Prostate gland (tissue), 2 donors: ENCODE measurements at regions of chr11 and their contacts with region 1.

Region 1: GRCh38 chr11:36469881-36470802 is 39.9 kb downstream of the TRAF6 start:
- DNase-seq: no peak
- H3K4me3 ChIP-seq: no peak overlapping the region
- H3K27ac ChIP-seq: no peak overlapping the region
- H3K4me1 ChIP-seq: no peaks in the 10 kb centered on the region
- H3K27me3 ChIP-seq: no peaks in the 10 kb centered on the region
- CTCF ChIP-seq: no peak
- POLR2A ChIP-seq: no peak

Region 2: DNA sequence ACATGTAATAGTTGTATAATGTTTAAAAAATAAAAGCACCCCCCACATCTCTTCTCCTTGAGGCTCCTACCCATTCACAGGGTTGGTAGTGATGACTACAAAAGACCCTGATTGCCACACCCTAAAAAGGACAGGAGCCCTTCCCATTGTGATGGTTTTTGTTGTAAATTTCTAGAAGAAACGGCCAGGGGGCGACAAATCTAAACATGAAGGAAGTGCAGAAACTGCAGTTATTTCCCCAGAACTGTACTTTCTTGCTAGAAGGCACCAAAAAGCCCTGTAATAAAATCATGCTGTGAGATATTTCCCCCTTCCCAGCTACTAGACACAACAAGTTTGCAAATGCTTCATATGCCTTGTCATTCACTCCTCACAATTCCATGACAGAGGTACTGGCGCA is 163.3 kb before region 1 on chr11:
- intact Hi-C with region 1: loop called (anchors 5 kb)
- DNase-seq: no peak
- H3K4me3 ChIP-seq: no peak overlapping the region
- H3K27ac ChIP-seq: no peak overlapping the region
- H3K4me1 ChIP-seq: no peaks in the 10 kb centered on the region
- H3K27me3 ChIP-seq: no peaks in the 10 kb centered on the region
- CTCF ChIP-seq: no peak
- POLR2A ChIP-seq: no peak

Region 3: DNA sequence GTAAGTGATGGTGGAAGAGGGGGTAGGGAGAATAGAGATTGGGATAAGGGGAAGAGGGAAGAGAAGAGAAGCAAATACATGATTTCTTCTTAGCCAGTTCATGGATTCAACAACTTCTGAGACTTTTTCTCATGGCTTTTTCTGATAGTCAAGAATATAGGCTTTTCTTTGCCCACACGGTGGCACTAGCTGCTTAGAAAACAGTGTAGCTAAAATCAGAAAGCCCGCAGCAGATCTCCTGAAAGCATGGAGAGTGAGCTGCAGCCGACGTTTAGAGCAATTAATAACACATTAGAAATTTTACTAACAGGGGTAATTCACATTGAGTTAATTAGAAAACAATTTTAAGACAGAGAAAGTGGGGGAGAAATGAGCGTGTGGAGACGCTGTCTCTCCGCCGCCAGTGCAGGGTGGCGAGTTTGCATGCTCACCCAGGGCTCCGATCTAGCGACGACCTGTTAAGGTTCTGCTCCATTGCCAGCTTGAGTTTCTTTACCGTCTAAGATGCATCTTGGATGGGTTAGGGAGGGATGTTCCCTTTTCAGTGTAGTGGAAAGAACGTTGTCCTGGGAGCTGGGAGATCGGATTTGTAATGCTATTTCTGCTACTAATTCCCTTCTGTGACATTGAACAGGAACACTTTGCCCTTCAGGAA is 94.4 kb after region 1 on chr11:
- intact Hi-C with region 1: no loop called
- DNase-seq: peak; percentile 50
- H3K4me3 ChIP-seq: peak overlapping the region in 1 of 2 donors; percentile 11
- H3K27ac ChIP-seq: no peak overlapping the region
- H3K4me1 ChIP-seq: no peaks in the 10 kb centered on the region
- H3K27me3 ChIP-seq: no peaks in the 10 kb centered on the region
- CTCF ChIP-seq: peak; percentile 32 to 71 (median 65)
- POLR2A ChIP-seq: no peak

Region 4: GRCh38 chr11:36890121-36890679 is 420.1 kb after region 1 on chr11:
- intact Hi-C with region 1: no loop called
- DNase-seq: no peak
- H3K4me3 ChIP-seq: no peak overlapping the region
- H3K27ac ChIP-seq: no peak overlapping the region
- H3K4me1 ChIP-seq: no peaks in the 10 kb centered on the region
- H3K27me3 ChIP-seq: no peaks in the 10 kb centered on the region
- CTCF ChIP-seq: no peak
- POLR2A ChIP-seq: no peak